CD4-positive, alpha-beta memory T cell (primary cell): ENCODE measurements at regions of chr22 and their contacts with region 1.

Region 1: DNA sequence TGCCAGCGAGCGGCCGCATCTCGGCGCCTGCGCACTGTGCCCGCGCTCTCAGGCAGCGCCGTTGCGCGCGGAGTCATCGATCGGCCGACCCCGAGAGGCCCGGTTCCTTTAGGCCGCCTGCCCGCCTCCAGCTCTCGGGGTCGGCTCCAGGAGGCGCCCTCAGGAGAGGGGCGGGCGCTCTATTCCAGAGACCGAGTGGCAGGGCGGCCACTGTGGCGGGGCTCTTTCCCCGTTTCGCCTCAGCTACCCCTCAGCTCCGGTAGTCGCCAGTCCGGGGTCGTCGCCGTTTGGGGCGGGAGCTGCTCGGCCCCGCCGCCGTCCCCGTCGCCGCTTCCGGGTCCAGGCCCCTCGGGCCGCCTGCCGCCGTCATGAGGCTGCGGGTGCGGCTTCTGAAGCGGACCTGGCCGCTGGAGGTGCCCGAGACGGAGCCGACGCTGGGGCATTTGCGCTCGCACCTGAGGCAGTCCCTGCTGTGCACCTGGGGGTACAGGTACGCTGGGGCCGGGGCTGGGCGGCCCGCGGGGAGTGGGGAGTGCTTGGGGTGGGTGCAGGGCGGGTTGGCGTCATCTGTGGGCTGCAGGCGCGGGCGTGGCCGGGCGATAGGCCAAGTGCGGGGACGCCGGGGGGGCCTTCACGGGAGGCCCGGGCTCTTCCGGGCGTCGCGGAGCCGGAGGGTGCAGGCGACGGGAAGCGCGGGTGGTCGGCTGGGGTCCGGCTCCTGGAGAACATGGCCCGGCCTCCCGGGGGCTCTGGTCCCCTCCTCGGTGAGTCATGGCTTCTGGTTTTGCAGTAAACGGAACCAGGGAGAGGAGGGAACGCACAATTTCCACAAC is at the start of gene FBXO7:
- DNase-seq: peak; percentile 84 to 88 (median 86)
- H3K4me3 ChIP-seq: peak within 1 kb of the TSS; percentile 72 to 91
- H3K4me3 Mint-ChIP-seq: peak within 1 kb of the TSS; percentile 95 to 98 (median 97)
- H3K27ac ChIP-seq: peak within 1 kb of the TSS; percentile 95
- H3K27ac Mint-ChIP-seq: peak within 1 kb of the TSS; percentile 92 to 98 (median 96)
- H3K4me1 ChIP-seq: peaks cover 41% of the 10 kb centered on the region
- H3K4me1 Mint-ChIP-seq: peaks cover 20 to 45% (median 31%) of the 10 kb centered on the region in 4 donors
- H3K27me3 ChIP-seq: no peaks in the 10 kb centered on the region
- H3K27me3 Mint-ChIP-seq: no peaks in the 10 kb centered on the region
- total RNA-seq, gene FBXO7: 89.3 to 95.3 TPM

Region 2: GRCh38 chr22:31749636-31750364 is 725.1 kb before region 1 on chr22 and contains the start of gene PRR14L:
- CTCF ChIA-PET with region 1: no interaction called
- POLR2A ChIA-PET with region 1: interaction called, 3 read pairs
- intact Hi-C with region 1: loop called (anchors 10 kb)
- DNase-seq: peak; percentile 96 to 99 (median 96)
- H3K4me3 ChIP-seq: peak within 1 kb of the TSS; percentile 24 to 87
- H3K4me3 Mint-ChIP-seq: peak within 1 kb of the TSS; percentile 92 to 100 (median 96)
- H3K27ac ChIP-seq: peak within 1 kb of the TSS; percentile 85
- H3K27ac Mint-ChIP-seq: peak within 1 kb of the TSS; percentile 93 to 97 (median 96)
- H3K4me1 ChIP-seq: peaks cover 48% of the 10 kb centered on the region
- H3K4me1 Mint-ChIP-seq: peaks cover 33 to 70% (median 50%) of the 10 kb centered on the region in 4 donors
- H3K27me3 ChIP-seq: no peaks in the 10 kb centered on the region
- H3K27me3 Mint-ChIP-seq: no peaks in the 10 kb centered on the region
- total RNA-seq, gene PRR14L: 70.7 to 72.6 TPM

Region 3: DNA sequence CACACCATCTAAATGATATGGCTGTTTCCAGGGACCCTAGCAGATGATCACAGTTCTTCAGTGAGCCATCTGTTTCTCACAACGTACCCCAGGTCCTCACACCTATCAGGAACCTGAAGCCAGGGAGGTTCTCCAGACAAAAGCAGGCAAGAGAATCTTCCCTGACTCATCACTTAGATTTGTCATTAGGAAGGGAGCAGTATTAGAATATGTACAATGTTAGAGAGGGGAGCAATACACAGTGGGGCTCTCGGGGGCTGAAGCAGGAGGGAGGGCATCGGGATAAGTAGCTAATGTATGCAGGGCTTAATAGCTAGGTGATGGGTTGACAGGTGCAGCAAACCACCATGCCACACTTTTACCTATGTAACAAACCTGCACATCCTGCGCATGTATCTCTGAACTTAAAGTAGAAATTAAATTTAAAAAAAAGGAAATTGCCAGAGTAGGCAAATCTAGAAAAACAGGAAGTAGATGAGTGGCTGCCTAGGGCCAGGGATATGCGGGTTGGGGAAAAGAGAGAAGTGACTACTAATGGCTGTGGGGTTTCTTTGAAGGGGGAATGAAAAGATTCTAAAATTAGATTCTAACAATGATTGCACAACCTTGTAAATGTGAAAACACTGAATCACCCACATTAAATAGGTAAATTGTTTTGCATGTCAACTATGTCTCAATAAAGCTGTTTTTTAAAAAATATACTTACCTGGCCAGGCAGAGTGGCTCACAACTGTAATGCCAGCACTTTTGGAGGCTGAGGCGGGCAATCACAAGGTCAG is 330.2 kb before region 1 on chr22:
- CTCF ChIA-PET with region 1: interaction called, 11 read pairs
- POLR2A ChIA-PET with region 1: interaction called, 3 read pairs
- intact Hi-C with region 1: loop called (anchors 2 kb)
- DNase-seq: peak in 1 of 5 donors; percentile 12
- H3K4me3 ChIP-seq: no peak overlapping the region
- H3K4me3 Mint-ChIP-seq: peak overlapping the region in 5 of 8 donors; percentile 10 to 60 (median 29)
- H3K27ac ChIP-seq: no peak overlapping the region
- H3K27ac Mint-ChIP-seq: peak overlapping the region; percentile 7 to 88 (median 60)
- H3K4me1 ChIP-seq: peaks cover 40% of the 10 kb centered on the region
- H3K4me1 Mint-ChIP-seq: peaks cover 31 to 47% (median 39%) of the 10 kb centered on the region in 4 donors
- H3K27me3 ChIP-seq: no peaks in the 10 kb centered on the region
- H3K27me3 Mint-ChIP-seq: no peaks in the 10 kb centered on the region

Region 4: GRCh38 chr22:32265882-32266767 is 208.7 kb before region 1 on chr22:
- CTCF ChIA-PET with region 1: interaction called, 3 read pairs
- POLR2A ChIA-PET with region 1: no interaction called
- intact Hi-C with region 1: loop called (anchors 5 kb)
- DNase-seq: peak; percentile 57 to 61 (median 58)
- H3K4me3 ChIP-seq: no peak overlapping the region
- H3K4me3 Mint-ChIP-seq: peak overlapping the region in 2 of 8 donors; percentile 32 to 76
- H3K27ac ChIP-seq: no peak overlapping the region
- H3K27ac Mint-ChIP-seq: peak overlapping the region in 1 of 7 donors; percentile 62
- H3K4me1 ChIP-seq: no peaks in the 10 kb centered on the region
- H3K4me1 Mint-ChIP-seq: peaks cover 4 to 10% (median 8%) of the 10 kb centered on the region in 4 donors
- H3K27me3 ChIP-seq: no peaks in the 10 kb centered on the region
- H3K27me3 Mint-ChIP-seq: peaks cover 6% of the 10 kb centered on the region in 2 donors

Region 5: GRCh38 chr22:32462452-32462851 is 12.4 kb before region 1 on chr22:
- CTCF ChIA-PET with region 1: no interaction called
- POLR2A ChIA-PET with region 1: no interaction called
- intact Hi-C with region 1: no loop called
- DNase-seq: no peak
- H3K4me3 ChIP-seq: no peak overlapping the region
- H3K4me3 Mint-ChIP-seq: no peak overlapping the region
- H3K27ac ChIP-seq: no peak overlapping the region
- H3K27ac Mint-ChIP-seq: no peak overlapping the region
- H3K4me1 ChIP-seq: no peaks in the 10 kb centered on the region
- H3K4me1 Mint-ChIP-seq: no peaks in the 10 kb centered on the region
- H3K27me3 ChIP-seq: peaks cover 9% of the 10 kb centered on the region
- H3K27me3 Mint-ChIP-seq: peaks cover 32 to 61% of the 10 kb centered on the region in 2 donors

Region 6: DNA sequence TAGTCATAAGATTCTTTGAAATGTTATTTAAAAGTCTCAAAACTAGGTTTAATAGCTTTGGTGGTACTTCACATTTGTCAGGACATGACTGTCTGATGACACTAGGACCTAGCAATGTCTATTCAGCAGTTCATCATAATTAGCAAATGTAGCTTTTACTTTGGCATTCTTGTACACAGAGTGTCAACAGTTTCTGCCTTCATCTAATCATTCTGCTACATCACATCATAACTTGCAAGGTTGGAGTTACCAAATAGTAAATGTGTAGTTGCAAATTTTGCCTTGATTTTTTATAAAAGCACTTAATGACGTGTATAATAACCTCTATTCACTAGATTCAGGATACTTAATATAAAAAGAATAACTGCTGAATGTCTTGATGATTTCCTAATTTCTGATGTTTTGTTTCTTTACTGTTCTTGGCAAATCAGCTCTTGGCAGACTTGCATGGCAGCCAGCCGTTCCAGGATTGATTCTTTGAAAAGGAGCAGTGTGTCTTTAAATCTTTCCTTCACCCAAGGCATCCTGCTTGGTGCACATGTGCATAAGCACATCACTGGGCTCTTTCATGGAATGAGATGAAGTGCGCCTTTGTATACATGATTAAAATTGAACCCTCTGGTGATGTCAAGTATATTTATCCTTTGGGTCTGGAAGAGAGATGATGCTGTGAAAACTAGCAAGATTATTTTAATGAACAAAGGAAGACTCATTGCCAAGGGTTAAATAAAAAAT is 12.0 kb after region 1 on chr22:
- CTCF ChIA-PET with region 1: interaction called, 5 read pairs
- POLR2A ChIA-PET with region 1: interaction called, 13 read pairs
- intact Hi-C with region 1: no loop called
- DNase-seq: no peak
- H3K4me3 ChIP-seq: no peak overlapping the region
- H3K4me3 Mint-ChIP-seq: no peak overlapping the region
- H3K27ac ChIP-seq: no peak overlapping the region
- H3K27ac Mint-ChIP-seq: no peak overlapping the region
- H3K4me1 ChIP-seq: peaks cover 16% of the 10 kb centered on the region
- H3K4me1 Mint-ChIP-seq: peaks cover 4 to 11% (median 7%) of the 10 kb centered on the region in 4 donors
- H3K27me3 ChIP-seq: no peaks in the 10 kb centered on the region
- H3K27me3 Mint-ChIP-seq: no peaks in the 10 kb centered on the region